ENCODE measurements at regions of chr2 and their contacts with region 1.

Region 1: GRCh38 chr2:108637304-108637669 is 82.0 kb upstream of the RANBP2 start:
- DNase-seq: peak in 1 of 2 experiments; percentile 32
- ATAC-seq: 0 out of 6 replicates have a peak, but pooled peaks of 1 of the 2 experiments have one; percentile 7
- H3K4me3 ChIP-seq: no peak overlapping the region
- H3K27ac ChIP-seq: peak overlapping the region; percentile 10 to 64; a peak in 4 of 6 replicates
- H3K4me1 ChIP-seq: peaks cover 75% of the 10 kb centered on the region
- CTCF ChIP-seq: no peak
- EP300 ChIP-seq: no peak
- POLR2A ChIP-seq: no peak
- RAD21 ChIP-seq: no peak

Region 2: DNA sequence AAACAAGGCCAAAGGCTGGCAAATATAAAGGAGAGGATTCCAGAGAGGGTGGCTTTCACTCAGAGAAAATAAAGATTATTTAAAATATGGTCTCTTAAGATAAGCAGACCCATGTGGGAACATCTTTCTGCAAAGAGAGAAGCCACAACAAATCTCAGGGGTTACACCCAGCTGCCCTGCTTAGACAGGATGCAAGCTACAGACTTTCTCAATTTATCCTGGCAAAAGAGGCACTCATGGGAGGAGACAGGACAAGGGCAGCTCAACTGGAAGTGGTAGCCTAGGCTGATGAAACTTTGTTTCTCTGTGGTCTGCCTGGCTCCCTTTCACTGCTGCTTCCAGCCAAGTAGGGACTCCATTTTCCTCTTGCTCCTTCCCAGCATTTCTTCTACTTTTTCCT is 285.4 kb before region 1 on chr2:
- CTCF ChIA-PET with region 1: interaction called, 22 read pairs
- POLR2A ChIA-PET with region 1: no interaction called
- DNase-seq: no peak
- ATAC-seq: no peak
- H3K4me3 ChIP-seq: no peak overlapping the region
- H3K27ac ChIP-seq: peak overlapping the region; percentile 26 to 56; a peak in 3 of 6 replicates
- H3K4me1 ChIP-seq: peaks cover 7% of the 10 kb centered on the region
- CTCF ChIP-seq: no peak
- EP300 ChIP-seq: no peak
- POLR2A ChIP-seq: no peak
- RAD21 ChIP-seq: no peak

Region 3: GRCh38 chr2:108575132-108575966 is 61.9 kb before region 1 on chr2:
- CTCF ChIA-PET with region 1: interaction called, 16 read pairs
- POLR2A ChIA-PET with region 1: no interaction called
- DNase-seq: peak in 1 of 2 experiments; percentile 25
- ATAC-seq: peak; percentile 39 to 55; a peak in 3 of 6 replicates
- H3K4me3 ChIP-seq: no peak overlapping the region
- H3K27ac ChIP-seq: peak overlapping the region; percentile 76 to 82
- H3K4me1 ChIP-seq: peaks cover 100% of the 10 kb centered on the region
- CTCF ChIP-seq: no peak
- EP300 ChIP-seq: peak in 1 of 2 experiments; percentile 60; a peak in 1 of 5 replicates
- POLR2A ChIP-seq: no peak
- RAD21 ChIP-seq: no peak

Region 4: GRCh38 chr2:108594132-108594981 is 42.9 kb before region 1 on chr2:
- CTCF ChIA-PET with region 1: interaction called, 33 read pairs
- POLR2A ChIA-PET with region 1: interaction called, 3 read pairs
- DNase-seq: peak in 1 of 2 experiments; percentile 76
- ATAC-seq: peak; percentile 80 to 81
- H3K4me3 ChIP-seq: 0 out of 3 replicates have a peak overlapping the region, but pooled peaks have one; percentile 5
- H3K27ac ChIP-seq: peak overlapping the region; percentile 85 to 86
- H3K4me1 ChIP-seq: peaks cover 58% of the 10 kb centered on the region
- CTCF ChIP-seq: no peak
- EP300 ChIP-seq: peak; percentile 29 to 39; a peak in 1 of 5 replicates
- POLR2A ChIP-seq: no peak
- RAD21 ChIP-seq: 0 out of 5 replicates have a peak, but pooled peaks of 1 of the 2 experiments have one; percentile 9

Region 5: DNA sequence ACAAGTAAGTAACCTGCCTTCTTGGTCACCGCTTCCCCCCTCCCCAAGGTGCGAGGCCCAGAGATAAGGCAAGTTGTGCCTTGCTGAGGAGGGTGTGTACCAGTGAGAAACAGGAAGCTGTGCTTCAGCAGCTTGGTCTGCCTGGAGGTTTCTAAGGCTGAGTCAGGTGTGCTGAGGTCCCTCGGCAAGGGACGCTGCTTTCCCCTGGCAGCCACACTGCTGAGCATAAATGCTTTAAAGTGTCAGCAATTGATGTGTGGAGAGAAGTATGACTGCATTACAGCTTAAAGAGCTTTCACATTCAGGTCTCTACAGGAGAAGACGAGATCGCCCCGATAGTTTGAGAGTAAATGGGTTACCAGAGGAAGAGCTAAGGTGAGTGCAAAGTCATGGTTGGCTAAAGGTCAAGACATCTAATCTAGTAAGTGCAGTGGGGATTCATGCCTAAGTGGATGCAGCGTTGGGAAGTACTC is 16.2 kb before region 1 on chr2:
- CTCF ChIA-PET with region 1: interaction called, 107 read pairs
- POLR2A ChIA-PET with region 1: interaction called, 4 read pairs
- DNase-seq: peak in 1 of 2 experiments; percentile 56
- ATAC-seq: peak; percentile 92 to 96
- H3K4me3 ChIP-seq: peak overlapping the region; percentile 12; the same call in 1 of the 3 replicates
- H3K27ac ChIP-seq: peak overlapping the region; percentile 65 to 83
- H3K4me1 ChIP-seq: peaks cover 58% of the 10 kb centered on the region
- CTCF ChIP-seq: no peak
- EP300 ChIP-seq: no peak
- POLR2A ChIP-seq: no peak
- RAD21 ChIP-seq: no peak

Region 6: DNA sequence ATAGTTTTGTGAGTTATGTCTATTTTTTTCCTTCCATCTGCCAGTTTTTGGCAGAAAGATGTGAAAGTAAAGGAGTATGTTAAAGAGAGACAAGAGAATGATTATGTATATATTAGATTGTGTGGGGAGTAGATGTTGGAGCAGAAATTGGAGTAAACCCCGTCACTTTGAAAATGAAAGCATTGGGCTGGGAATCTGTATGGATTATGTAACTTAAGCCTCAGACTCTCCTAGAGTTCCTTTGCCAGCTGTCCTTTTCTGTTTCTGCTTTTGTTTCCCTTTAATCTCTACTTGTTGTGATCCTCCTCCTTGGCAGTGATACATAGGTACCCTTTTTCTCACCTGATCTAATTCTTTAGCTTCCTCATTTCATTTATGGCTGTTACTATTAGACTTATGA is 168.5 kb after region 1 on chr2:
- CTCF ChIA-PET with region 1: no interaction called
- POLR2A ChIA-PET with region 1: no interaction called
- DNase-seq: no peak
- ATAC-seq: no peak
- H3K4me3 ChIP-seq: no peak overlapping the region
- H3K27ac ChIP-seq: no peak overlapping the region
- H3K4me1 ChIP-seq: no peaks in the 10 kb centered on the region
- CTCF ChIP-seq: no peak
- EP300 ChIP-seq: no peak
- POLR2A ChIP-seq: no peak
- RAD21 ChIP-seq: no peak

Measured in A549 (cell line).